ENCODE measurements at regions of chr10 and their contacts with region 1.

Region 1: GRCh38 chr10:101161494-101162299 is 30.6 kb downstream of the TLX1 start:
- DNase-seq: peak; percentile 70
- H3K4me3 Mint-ChIP-seq: no peak overlapping the region
- H3K27ac Mint-ChIP-seq: no peak overlapping the region
- H3K4me1 Mint-ChIP-seq: peaks cover 15% of the 10 kb centered on the region
- H3K27me3 Mint-ChIP-seq: peaks cover 67% of the 10 kb centered on the region

Region 2: DNA sequence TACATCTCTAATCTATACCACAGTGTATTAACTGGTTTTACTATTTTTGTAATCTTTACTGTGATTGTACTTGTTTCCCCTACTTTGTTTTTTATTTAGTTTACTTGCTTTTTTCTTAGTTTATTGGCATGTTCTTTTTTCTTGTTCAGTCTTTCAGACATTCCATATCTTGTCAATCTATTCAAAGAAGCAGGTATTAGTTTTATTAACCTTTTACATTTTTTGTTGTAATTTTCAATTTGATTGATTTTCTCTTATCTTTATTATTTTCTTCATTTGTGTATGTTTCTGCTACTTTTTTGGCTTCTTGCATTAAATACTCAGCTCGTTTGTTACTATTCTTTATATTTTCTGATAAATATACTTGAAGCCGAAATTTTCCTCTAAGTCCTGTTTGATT is 11.0 kb after region 1 on chr10:
- CTCF ChIA-PET with region 1: interaction called, 12 read pairs
- POLR2A ChIA-PET with region 1: no interaction called
- DNase-seq: no peak
- H3K4me3 Mint-ChIP-seq: no peak overlapping the region
- H3K27ac Mint-ChIP-seq: no peak overlapping the region
- H3K4me1 Mint-ChIP-seq: no peaks in the 10 kb centered on the region
- H3K27me3 Mint-ChIP-seq: peaks cover 49% of the 10 kb centered on the region

Region 3: GRCh38 chr10:101228153-101228973 is 66.7 kb after region 1 on chr10:
- CTCF ChIA-PET with region 1: no interaction called
- POLR2A ChIA-PET with region 1: no interaction called
- DNase-seq: no peak
- H3K4me3 Mint-ChIP-seq: peak overlapping the region; percentile 6
- H3K27ac Mint-ChIP-seq: peak overlapping the region; percentile 53
- H3K4me1 Mint-ChIP-seq: peaks cover 34% of the 10 kb centered on the region
- H3K27me3 Mint-ChIP-seq: peaks cover 72% of the 10 kb centered on the region

Region 4: GRCh38 chr10:101249171-101249581 is 87.5 kb after region 1 on chr10:
- CTCF ChIA-PET with region 1: no interaction called
- POLR2A ChIA-PET with region 1: no interaction called
- DNase-seq: no peak
- H3K4me3 Mint-ChIP-seq: no peak overlapping the region
- H3K27ac Mint-ChIP-seq: no peak overlapping the region
- H3K4me1 Mint-ChIP-seq: no peaks in the 10 kb centered on the region
- H3K27me3 Mint-ChIP-seq: peaks cover 46% of the 10 kb centered on the region

Measured in activated CD4-positive, alpha-beta memory T cell treated with anti-CD3 and anti-CD28 coated beads, Interleukin-2, amount 10 ng/mL, durations not matched to agents 7 days and 5 days (primary cell).